ENCODE measurements at regions of chr2 and their contacts with region 1.

Region 1: DNA sequence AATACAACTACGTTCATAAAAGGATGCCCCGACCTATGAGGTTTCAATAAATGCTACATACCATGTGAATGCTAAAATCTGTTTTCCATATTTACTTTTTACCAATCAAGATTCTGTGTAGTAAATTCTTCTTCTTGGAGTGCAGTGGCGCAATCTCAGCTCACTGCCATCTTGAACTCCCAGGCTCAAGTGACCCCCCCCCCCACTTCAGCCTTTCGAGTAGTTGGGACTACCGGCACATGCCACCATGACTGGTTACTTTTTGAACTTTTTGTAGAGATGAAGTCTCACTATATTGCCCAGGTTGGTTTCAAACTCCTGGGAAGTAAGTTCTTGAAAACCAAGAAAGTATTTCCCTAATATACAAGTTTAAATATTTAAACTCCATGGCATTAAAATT is 14.4 kb upstream of the USP34 start:
- DNase-seq: no peak
- ATAC-seq: no peak
- H3K4me3 ChIP-seq: no peak overlapping the region
- H3K27ac ChIP-seq: no peak overlapping the region
- H3K4me1 ChIP-seq: no peaks in the 10 kb centered on the region
- H3K27me3 ChIP-seq: no peaks in the 10 kb centered on the region
- CTCF ChIP-seq: no peak
- POLR2A ChIP-seq: no peak

Region 2: GRCh38 chr2:61318553-61318952 is 166.7 kb before region 1 on chr2:
- intact Hi-C with region 1: loop called in 1 of 10 experiments (anchors 10 kb)
- DNase-seq: no peak
- ATAC-seq: no peak
- H3K4me3 ChIP-seq: no peak overlapping the region
- H3K27ac ChIP-seq: no peak overlapping the region
- H3K4me1 ChIP-seq: no peaks in the 10 kb centered on the region
- H3K27me3 ChIP-seq: no peaks in the 10 kb centered on the region
- CTCF ChIP-seq: no peak
- POLR2A ChIP-seq: no peak

Region 3: GRCh38 chr2:61335187-61335586 is 150.1 kb before region 1 on chr2:
- intact Hi-C with region 1: loop called in 1 of 10 experiments (anchors 10 kb)
- DNase-seq: no peak
- ATAC-seq: no peak
- H3K4me3 ChIP-seq: no peak overlapping the region
- H3K27ac ChIP-seq: no peak overlapping the region
- H3K4me1 ChIP-seq: no peaks in the 10 kb centered on the region
- H3K27me3 ChIP-seq: no peaks in the 10 kb centered on the region
- CTCF ChIP-seq: no peak
- POLR2A ChIP-seq: no peak

Region 4: DNA sequence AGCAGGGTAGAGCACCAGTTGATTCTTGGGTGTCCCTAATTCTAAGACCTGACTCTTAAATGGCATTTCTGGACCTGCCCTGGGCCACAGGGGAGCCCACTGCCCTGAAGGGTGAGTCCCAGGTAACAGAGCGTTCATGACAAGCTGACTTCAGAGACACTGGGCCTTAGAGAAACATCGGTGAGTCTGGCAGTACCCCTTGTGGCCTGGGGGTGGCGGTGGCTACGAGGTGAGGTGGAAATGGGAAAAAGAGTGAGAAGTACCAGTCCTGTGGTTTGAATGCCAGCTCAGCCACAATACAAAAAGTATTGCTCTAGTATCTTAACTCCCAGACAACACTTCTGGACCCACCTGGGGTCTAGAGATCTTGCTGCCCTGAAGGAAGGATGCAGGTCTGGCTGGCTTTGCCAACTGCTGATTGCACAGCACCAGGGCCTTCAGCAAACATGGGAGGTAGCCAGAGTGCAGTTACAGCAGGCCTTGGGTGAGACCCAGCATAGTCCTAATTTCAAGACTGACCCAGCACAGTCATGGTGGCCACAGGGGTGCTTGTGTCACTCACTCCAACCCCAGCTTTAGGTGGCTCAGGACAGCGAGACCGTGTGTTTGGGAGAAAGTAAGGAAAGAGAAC is 58.9 kb before region 1 on chr2:
- intact Hi-C with region 1: no loop called
- DNase-seq: no peak
- ATAC-seq: peak in 3 of 4 donors; percentile 35 to 75 (median 71)
- H3K4me3 ChIP-seq: no peak overlapping the region
- H3K27ac ChIP-seq: no peak overlapping the region
- H3K4me1 ChIP-seq: peaks cover 1 to 64% (median 27%) of the 10 kb centered on the region in 12 donors
- H3K27me3 ChIP-seq: no peaks in the 10 kb centered on the region
- CTCF ChIP-seq: peak in 10 of 12 donors; percentile 13 to 47 (median 33)
- POLR2A ChIP-seq: no peak

Measured in heart left ventricle (tissue), 16 donors.